ENCODE measurements at regions of chr5 and their contacts with region 1.

Region 1: DNA sequence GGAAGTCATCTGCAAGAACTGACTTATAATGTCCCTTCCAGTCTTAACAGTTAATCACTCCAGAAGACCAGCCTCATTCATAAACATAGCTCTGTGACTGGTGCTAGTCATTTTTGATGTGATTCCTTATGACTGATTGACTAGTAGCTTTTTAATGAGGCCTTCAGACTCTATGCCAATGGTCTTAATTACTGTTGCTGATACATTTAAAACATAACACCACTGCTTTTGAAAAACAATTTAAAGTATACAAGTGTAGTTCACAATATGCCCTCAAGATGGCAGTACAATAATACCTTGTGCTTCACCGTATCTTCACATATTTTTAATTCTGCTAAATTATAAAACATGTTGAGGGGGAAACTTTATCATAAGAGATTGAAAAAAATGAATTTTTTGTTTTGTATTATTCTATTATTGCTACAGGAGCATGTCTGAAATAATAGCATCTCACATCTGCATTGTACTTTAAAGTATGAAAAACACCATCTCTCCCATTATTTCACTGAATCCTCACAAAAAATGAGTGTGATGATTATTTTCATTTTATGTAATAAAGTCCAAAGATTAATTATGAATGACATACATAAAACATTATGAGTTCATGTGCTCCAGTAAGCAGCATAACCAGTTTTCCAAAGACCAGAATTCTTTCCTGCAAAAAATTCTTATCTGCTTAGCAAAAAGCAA is 55.2 kb upstream of the SHISAL2B start:
- DNase-seq: no peak
- H3K4me3 ChIP-seq: no peak overlapping the region
- H3K27ac ChIP-seq: no peak overlapping the region
- H3K4me1 ChIP-seq: no peaks in the 10 kb centered on the region
- H3K27me3 ChIP-seq: no peaks in the 10 kb centered on the region
- CTCF ChIP-seq: peak; percentile 49 to 71 (median 62)
- POLR2A ChIP-seq: no peak

Region 2: DNA sequence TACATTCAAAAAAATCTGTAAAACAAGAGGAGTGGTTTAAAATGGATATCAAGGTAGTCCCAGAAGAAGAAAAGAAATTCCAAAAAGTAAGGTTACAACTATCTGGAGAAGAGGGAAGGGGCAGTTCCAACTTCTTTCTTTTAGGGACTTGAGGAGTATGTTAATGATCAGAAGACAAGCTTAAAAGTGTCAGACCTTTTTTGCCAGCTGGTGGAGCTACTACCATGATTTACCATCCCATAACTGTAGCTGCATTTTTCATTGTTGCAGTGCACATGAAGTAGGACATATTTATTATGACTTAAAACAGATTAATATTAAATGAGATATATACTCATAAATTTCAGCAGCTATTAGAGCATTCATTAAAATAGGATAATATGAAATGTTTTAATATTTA is 287.8 kb before region 1 on chr5:
- intact Hi-C with region 1: no loop called
- DNase-seq: no peak
- H3K4me3 ChIP-seq: no peak overlapping the region
- H3K27ac ChIP-seq: no peak overlapping the region
- H3K4me1 ChIP-seq: no peaks in the 10 kb centered on the region
- H3K27me3 ChIP-seq: no peaks in the 10 kb centered on the region
- CTCF ChIP-seq: no peak
- POLR2A ChIP-seq: no peak

Region 3: GRCh38 chr5:64784451-64785025 is 149.4 kb after region 1 on chr5:
- intact Hi-C with region 1: loop called (anchors 10 kb)
- DNase-seq: peak; percentile 40 to 73
- H3K4me3 ChIP-seq: no peak overlapping the region
- H3K27ac ChIP-seq: no peak overlapping the region
- H3K4me1 ChIP-seq: peaks cover 0 to 5% of the 10 kb centered on the region in 2 donors
- H3K27me3 ChIP-seq: no peaks in the 10 kb centered on the region
- CTCF ChIP-seq: peak; percentile 53 to 75 (median 71)
- POLR2A ChIP-seq: no peak

Region 4: DNA sequence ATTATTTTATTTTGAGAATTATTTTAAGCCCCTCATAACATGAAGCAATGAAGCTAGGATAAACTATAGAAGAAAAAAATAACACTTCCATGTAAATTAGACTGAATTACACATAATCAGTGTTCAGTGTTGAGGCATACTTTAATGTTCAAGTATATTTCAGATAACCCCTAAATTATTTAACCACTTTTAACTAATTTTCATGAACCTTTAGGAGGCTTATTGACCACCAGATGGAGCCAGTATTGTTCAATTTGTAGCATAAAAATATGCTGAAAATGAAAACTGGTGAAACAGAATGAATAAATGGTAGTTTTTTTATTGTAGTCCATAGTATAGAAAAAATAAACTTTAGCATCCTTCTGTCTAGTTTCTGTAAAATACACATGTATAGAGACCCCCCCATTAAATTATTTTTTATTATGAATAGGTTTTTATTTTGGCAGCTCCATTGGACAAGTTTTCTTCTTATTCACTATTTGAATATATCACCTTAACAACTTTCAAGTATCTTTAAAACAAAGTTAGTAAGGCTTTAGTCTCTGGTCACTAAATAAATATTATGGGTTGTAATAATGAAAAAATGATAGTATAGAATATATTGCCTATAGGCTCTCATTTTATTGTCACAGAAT is 323.7 kb after region 1 on chr5:
- intact Hi-C with region 1: no loop called
- DNase-seq: no peak
- H3K4me3 ChIP-seq: no peak overlapping the region
- H3K27ac ChIP-seq: no peak overlapping the region
- H3K4me1 ChIP-seq: no peaks in the 10 kb centered on the region
- H3K27me3 ChIP-seq: no peaks in the 10 kb centered on the region
- CTCF ChIP-seq: peak; percentile 42 to 65 (median 54)
- POLR2A ChIP-seq: no peak